ENCODE measurements at regions of chr2 and their contacts with region 1.

Region 1: DNA sequence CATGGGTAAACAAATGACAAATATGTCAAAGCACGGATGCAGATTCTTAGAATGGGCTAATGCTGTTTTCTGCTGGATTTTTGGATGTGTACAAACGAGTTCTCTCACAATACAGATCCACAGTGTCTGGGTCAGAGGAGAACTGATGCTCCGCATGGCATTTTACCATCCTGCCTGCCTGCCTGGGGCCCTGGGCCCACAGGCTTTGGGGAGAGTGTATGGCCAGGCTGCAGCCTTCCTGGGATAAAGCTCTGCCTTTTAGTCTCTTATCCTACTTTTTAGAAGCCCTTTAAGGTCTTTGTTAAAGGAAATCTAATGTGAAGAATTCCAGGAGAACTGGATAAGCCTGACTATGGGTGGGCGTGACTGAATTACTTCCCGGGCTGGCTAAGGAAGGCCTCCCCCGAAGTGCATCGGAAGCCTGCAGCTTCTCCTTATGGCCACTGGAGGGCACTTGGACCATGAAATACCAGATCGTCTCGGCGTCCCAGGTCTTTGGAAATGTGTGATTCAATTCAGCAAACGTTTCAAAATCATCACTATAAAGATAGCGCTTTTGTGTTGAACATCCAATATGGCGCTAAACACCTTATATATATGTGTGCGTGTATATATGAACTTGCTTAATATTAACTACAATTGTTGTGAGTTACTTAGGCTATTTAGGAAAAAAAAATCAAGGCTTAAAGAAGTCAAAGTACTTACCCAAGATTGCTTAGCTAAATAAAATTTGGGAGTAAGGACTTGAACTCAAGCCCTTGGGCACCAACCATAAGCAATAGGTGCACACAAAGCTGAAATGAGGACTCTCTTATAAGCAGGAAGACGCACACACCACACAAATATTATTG is 15.2 kb upstream of the DNPEP start:
- DNase-seq: no peak

Region 2: GRCh38 chr2:219417374-219417773 is 14.5 kb after region 1 on chr2:
- intact Hi-C with region 1: loop called (anchors 1 kb)
- DNase-seq: peak; percentile 87

Region 3: GRCh38 chr2:219430633-219431615 is 28.0 kb after region 1 on chr2:
- intact Hi-C with region 1: loop called (anchors 1 kb)
- DNase-seq: no peak

Region 4: GRCh38 chr2:219452838-219453317 is 50.0 kb after region 1 on chr2:
- intact Hi-C with region 1: loop called (anchors 2 kb)
- DNase-seq: peak; percentile 78

Region 5: GRCh38 chr2:219521066-219521880 is 118.4 kb after region 1 on chr2:
- intact Hi-C with region 1: loop called (anchors 2 kb)
- DNase-seq: no peak

Region 6: GRCh38 chr2:219633276-219634065 is 230.6 kb after region 1 on chr2:
- intact Hi-C with region 1: loop called (anchors 5 kb)
- DNase-seq: no peak

Region 7: DNA sequence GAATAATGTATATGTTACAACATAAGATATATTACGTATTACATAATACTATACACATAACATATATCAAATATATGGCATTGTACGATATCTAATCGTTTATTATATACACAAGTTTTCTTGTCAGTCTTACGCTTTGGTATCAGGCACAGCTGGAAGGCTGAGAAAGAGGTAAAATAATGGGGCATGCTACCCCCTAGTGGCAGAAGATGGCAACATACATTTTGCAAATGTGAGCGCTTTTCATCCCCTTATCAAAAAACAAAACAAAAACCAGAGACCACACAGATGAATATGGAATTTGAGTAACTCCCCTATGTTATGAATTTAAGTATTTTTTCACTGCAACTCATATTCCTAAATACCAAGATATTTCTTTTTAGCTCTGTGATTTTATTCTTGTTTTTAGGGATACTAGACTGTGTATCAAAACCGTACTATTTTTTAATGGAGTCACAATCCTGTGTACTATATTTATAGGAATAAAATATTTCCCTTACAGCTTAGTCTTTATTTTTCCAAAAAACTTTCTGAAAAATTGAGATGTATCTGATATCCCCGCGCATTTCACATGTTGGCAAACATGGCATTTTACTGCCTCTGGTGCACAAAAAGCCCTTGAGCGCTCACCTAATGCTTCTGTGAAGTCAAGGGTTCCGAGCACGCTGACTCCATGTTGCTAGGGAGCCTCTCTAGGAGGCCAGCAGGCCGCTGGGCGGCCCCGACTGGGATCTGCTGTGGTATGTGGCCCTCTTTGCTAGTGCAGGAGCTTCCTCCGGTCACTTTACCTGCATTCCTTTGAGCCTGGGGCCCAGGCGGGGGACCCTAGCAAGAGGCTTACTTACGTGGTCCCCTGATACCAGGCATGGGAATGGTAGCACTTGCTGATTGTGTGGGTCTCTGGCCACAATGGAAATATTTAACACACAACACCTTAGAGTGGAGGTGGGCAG is 287.1 kb after region 1 on chr2:
- intact Hi-C with region 1: loop called (anchors 10 kb)
- DNase-seq: no peak